ENCODE measurements at regions of chr2 and their contacts with region 1.

Region 1: DNA sequence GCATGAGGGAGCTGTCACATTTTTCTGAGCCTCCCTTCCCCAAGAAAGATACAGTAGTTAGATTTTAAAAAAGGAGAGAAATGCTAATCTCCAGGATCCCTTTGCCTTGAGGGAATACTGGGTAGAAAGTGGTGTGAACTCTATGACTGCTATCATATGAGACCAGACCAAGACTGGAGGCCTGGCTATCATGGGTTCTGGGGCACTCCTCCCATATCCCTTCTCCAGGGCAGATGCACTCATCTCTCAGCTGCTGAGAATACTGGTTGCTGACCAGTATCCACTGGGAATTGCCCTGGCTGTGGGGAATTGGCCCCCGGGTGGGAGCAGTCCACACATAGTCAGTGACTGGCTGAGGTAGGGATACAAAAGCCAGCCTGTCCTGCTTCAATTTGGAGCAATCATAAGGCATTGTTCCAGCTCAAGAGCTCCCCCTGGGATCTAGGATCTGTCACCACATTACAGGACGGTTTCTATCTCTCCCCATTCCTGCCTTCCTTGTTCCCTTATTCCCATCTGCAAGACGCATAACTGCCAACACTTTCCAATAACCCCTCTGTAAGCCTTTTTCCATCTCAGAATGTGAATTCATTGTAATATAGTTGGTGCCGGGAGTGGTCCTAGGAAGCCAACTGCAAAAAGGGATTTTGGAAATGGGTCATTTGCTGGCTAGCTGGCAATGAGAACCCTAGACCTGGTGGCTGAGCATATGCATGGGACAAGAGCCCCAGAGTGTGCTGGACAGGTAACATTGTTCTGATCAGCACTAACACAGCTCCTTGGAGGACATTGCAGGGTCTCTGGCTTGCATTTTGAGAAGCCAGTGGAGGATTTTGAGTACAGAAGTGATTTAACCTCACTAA is 35.4 kb upstream of the REEP1 start:
- DNase-seq: no peak
- ATAC-seq: peak; percentile 94
- H3K4me3 ChIP-seq: no peak overlapping the region
- H3K27ac ChIP-seq: no peak overlapping the region
- H3K4me1 ChIP-seq: peaks cover 4% of the 10 kb centered on the region; the same call in 1 of the 2 replicates
- H3K27me3 ChIP-seq: peaks cover 4% of the 10 kb centered on the region
- CTCF ChIP-seq: peak; percentile 82

Region 2: GRCh38 chr2:86195055-86195807 is 177.6 kb before region 1 on chr2 and contains the start of gene IMMT:
- CTCF ChIA-PET with region 1: no interaction called
- POLR2A ChIA-PET with region 1: no interaction called
- in situ Hi-C with region 1: no loop called
- intact Hi-C with region 1: loop called (anchors 5 kb)
- DNase-seq: peak; percentile 97
- ATAC-seq: peak; percentile 93
- H3K4me3 ChIP-seq: peak within 1 kb of the TSS; percentile 88 to 100
- H3K27ac ChIP-seq: peak within 1 kb of the TSS; percentile 99
- H3K4me1 ChIP-seq: peaks cover 10% of the 10 kb centered on the region
- H3K27me3 ChIP-seq: no peaks in the 10 kb centered on the region
- CTCF ChIP-seq: no peak
- total RNA-seq, gene IMMT: 138 TPM

Region 3: GRCh38 chr2:86298411-86299379 is 74.2 kb before region 1 on chr2:
- CTCF ChIA-PET with region 1: interaction called, 5 read pairs
- POLR2A ChIA-PET with region 1: no interaction called
- in situ Hi-C with region 1: no loop called
- intact Hi-C with region 1: loop called (anchors 2 kb)
- DNase-seq: no peak
- ATAC-seq: peak; percentile 73
- H3K4me3 ChIP-seq: no peak overlapping the region
- H3K27ac ChIP-seq: no peak overlapping the region
- H3K4me1 ChIP-seq: no peaks in the 10 kb centered on the region
- H3K27me3 ChIP-seq: peaks cover 17% of the 10 kb centered on the region
- CTCF ChIP-seq: peak; percentile 61

Region 4: DNA sequence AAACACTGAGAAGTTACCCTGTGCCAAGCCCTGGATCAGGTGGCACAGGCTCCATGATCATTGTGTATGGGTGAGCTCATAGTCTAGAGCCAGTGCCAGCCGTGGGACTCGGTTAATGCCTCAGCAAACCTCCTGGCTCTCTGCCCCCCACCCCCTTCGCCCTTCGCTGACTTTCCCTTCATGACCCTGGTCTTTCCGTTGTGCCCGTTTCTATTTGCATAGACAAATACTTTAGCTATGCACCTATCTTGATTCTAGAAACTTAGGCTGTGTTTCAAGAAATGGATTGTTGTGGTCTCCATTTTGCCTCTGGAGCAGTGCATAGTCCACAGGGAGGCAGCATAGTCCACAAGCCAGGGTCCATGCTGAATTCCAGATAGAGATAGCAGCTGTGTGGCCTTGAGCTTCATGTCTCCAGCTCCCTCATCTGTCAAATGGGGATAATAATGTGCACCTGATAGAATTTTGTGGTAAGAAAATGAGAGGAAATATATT is 23.5 kb after region 1 on chr2:
- CTCF ChIA-PET with region 1: no interaction called
- POLR2A ChIA-PET with region 1: interaction called, 16 read pairs
- in situ Hi-C with region 1: no loop called
- intact Hi-C with region 1: no loop called
- DNase-seq: peak; percentile 41
- ATAC-seq: peak; percentile 92
- H3K4me3 ChIP-seq: peak overlapping the region in 1 of 2 experiments; percentile 31; a peak in 2 of 4 replicates
- H3K27ac ChIP-seq: no peak overlapping the region
- H3K4me1 ChIP-seq: no peaks in the 10 kb centered on the region
- H3K27me3 ChIP-seq: no peaks in the 10 kb centered on the region
- CTCF ChIP-seq: peak; percentile 81

Measured in Panc1 (cell line).